Endothelial cell of umbilical vein (primary cell): ENCODE measurements at regions of chr11 and their contacts with region 1.

Region 1: GRCh38 chr11:61254403-61255025 is 13.5 kb downstream of the PGA5 start:
- DNase-seq: peak; percentile 61
- H3K4me3 ChIP-seq: no peak overlapping the region
- H3K27ac ChIP-seq: no peak overlapping the region
- H3K4me1 ChIP-seq: no peaks in the 10 kb centered on the region
- H3K27me3 ChIP-seq: peaks cover 0 to 1% of the 10 kb centered on the region in 2 experiments
- CTCF ChIP-seq: peak; percentile 75 to 96
- POLR2A ChIP-seq: no peak

Region 2: DNA sequence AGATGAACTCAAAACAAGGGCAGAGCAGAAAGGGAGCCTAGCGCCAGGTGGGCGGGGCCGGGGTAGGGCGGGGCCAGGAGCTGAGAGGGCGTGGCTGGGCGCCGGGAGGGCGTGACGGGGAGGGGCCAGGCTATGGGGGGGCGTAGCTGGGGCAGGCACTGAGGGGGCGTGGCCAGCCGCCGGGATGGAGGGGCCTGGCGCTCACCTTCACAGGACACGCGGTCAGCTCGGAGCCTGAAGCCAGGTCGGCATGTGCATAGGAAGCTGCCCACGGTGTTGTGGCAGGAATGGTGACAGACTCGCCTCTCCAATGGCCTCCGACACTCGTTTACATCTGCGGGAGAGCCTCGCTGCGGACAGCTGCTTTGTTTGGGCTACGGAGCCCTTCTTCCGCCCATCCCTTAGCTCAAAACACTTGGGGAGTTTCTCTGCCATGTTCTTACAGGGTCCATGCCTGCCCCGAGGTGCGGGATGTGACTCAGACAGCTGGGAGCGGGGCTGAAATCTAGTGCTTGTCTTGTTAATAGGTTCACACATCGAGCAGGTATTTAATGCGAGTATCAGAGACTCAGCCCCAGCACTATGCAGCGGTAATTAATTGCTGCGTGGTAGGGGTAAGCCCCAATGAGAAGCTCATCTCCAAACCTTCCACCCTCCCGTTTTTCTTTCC is 27.2 kb after region 1 on chr11:
- CTCF ChIA-PET with region 1: interaction called, 3 read pairs
- POLR2A ChIA-PET with region 1: no interaction called
- dilution Hi-C with region 1: no loop called
- intact Hi-C with region 1: loop called (anchors 1 kb)
- DNase-seq: peak; percentile 46
- H3K4me3 ChIP-seq: no peak overlapping the region
- H3K27ac ChIP-seq: no peak overlapping the region
- H3K4me1 ChIP-seq: no peaks in the 10 kb centered on the region
- H3K27me3 ChIP-seq: peaks cover 0 to 3% of the 10 kb centered on the region in 2 experiments
- CTCF ChIP-seq: no peak
- POLR2A ChIP-seq: no peak

Region 3: GRCh38 chr11:61294717-61295595 is 40.4 kb after region 1 on chr11 and contains the start of gene VWCE:
- CTCF ChIA-PET with region 1: interaction called, 33 read pairs
- POLR2A ChIA-PET with region 1: no interaction called
- dilution Hi-C with region 1: no loop called
- intact Hi-C with region 1: loop called (anchors 1 kb)
- DNase-seq: peak; percentile 56
- H3K4me3 ChIP-seq: peak within 1 kb of the TSS; percentile 8 to 48 (median 45)
- H3K27ac ChIP-seq: no peak within 1 kb of the TSS
- H3K4me1 ChIP-seq: peaks cover 41% of the 10 kb centered on the region
- H3K27me3 ChIP-seq: peaks cover 5 to 9% of the 10 kb centered on the region in 2 experiments
- CTCF ChIP-seq: peak; percentile 10 to 29
- POLR2A ChIP-seq: no peak
- total RNA-seq, gene VWCE: 14.4 and 14.8 TPM in 2 replicates

Region 4: DNA sequence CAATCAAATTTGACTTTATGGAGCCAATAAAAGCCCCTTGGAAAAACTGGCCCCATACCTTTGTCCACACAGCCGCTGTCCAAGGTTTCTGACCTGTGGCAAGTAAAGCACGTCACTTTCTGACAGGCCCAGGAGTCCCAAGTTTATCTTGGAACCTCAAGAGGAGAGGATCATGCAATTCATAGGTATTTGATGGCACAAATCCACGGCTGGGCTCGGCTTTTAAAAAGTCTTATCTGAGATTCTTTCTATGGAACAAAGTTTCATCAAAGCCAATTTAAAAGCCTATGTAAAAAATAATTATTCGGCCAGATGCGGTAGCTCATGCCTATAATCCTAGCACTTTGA is 121.2 kb after region 1 on chr11:
- CTCF ChIA-PET with region 1: no interaction called
- POLR2A ChIA-PET with region 1: no interaction called
- dilution Hi-C with region 1: no loop called
- intact Hi-C with region 1: no loop called
- DNase-seq: no peak
- H3K4me3 ChIP-seq: no peak overlapping the region
- H3K27ac ChIP-seq: no peak overlapping the region
- H3K4me1 ChIP-seq: no peaks in the 10 kb centered on the region
- H3K27me3 ChIP-seq: no peaks in the 10 kb centered on the region
- CTCF ChIP-seq: no peak
- POLR2A ChIP-seq: no peak